ENCODE measurements at regions of chr15 and their contacts with region 1.

Region 1: GRCh38 chr15:69167218-69167846 is 6.9 kb downstream of the GLCE start:
- DNase-seq: no peak
- H3K4me3 ChIP-seq: no peak overlapping the region
- H3K27ac ChIP-seq: peak overlapping the region; percentile 24
- H3K4me1 ChIP-seq: peaks cover 49% of the 10 kb centered on the region
- H3K27me3 ChIP-seq: no peaks in the 10 kb centered on the region
- CTCF ChIP-seq: no peak

Region 2: DNA sequence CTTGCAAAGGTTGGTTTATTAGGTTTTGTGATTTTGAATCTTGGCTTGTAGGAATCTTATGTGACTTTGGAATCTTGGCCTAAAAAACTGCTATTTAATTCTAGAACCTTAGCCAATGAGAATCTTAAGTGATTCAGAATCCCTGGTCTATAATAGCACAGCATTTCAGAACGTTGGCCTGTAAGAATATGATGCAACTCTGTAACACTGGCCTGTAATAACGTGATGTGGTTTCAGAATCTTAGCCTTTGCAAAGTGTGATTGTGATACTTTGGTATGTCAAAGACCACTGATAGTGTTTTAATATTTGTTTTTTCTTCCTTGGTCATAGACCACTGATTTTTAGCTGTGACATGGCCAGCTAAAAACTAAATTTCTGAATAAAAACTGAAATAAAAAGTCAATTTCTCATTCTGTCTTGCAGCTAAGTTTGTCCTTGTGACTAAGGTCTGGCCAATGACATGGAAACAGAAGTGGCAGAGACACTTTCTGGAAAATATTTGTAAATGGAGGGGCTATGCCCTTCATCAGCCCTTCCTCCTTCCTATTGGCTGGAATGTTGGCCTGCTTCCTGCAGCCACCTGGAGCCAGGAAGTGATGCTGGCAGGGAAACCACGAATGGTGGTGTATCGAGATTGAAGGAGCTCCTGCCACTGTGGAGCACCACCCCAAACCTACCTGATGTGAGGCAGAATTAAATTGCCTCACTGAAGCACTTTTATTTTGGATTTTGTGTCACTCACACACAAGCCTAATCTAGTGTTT is 630.8 kb before region 1 on chr15:
- CTCF ChIA-PET with region 1: no interaction called
- POLR2A ChIA-PET with region 1: no interaction called
- intact Hi-C with region 1: no loop called
- DNase-seq: no peak
- H3K4me3 ChIP-seq: no peak overlapping the region
- H3K27ac ChIP-seq: no peak overlapping the region
- H3K4me1 ChIP-seq: no peaks in the 10 kb centered on the region
- H3K27me3 ChIP-seq: no peaks in the 10 kb centered on the region
- CTCF ChIP-seq: no peak

Region 3: GRCh38 chr15:68991723-68992122 is 175.6 kb before region 1 on chr15:
- CTCF ChIA-PET with region 1: no interaction called
- POLR2A ChIA-PET with region 1: no interaction called
- intact Hi-C with region 1: no loop called
- DNase-seq: no peak
- H3K4me3 ChIP-seq: no peak overlapping the region
- H3K27ac ChIP-seq: no peak overlapping the region
- H3K4me1 ChIP-seq: no peaks in the 10 kb centered on the region
- H3K27me3 ChIP-seq: no peaks in the 10 kb centered on the region
- CTCF ChIP-seq: no peak

Region 4: DNA sequence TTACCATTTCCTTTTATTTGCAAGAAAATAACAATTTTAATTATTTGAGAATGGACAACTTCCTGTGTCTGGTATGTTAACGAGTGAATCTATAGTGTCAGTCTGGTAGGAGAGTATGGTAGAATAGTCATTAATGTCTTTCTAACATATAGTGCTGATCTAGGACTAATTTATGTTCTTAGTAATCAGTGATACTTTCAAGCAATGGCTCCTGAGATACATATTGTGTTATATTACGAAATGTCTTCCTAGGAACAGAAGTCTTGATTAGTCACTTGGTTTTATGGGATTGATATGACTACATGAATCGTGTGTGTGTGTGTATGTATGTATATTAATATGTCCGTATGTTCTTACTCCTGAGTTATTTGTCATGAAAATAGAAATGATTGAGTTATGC is 64.8 kb after region 1 on chr15:
- CTCF ChIA-PET with region 1: no interaction called
- POLR2A ChIA-PET with region 1: interaction called, 16 read pairs
- intact Hi-C with region 1: no loop called
- DNase-seq: peak; percentile 46
- H3K4me3 ChIP-seq: no peak overlapping the region
- H3K27ac ChIP-seq: no peak overlapping the region
- H3K4me1 ChIP-seq: peaks cover 16% of the 10 kb centered on the region
- H3K27me3 ChIP-seq: no peaks in the 10 kb centered on the region
- CTCF ChIP-seq: no peak

Measured in A673 (cell line).